Heart left ventricle (tissue), 16 donors: ENCODE measurements at regions of chr2 and their contacts with region 1.

Region 1: GRCh38 chr2:206159346-206160124 is at the starts of genes EEF1B2 and NDUFS1:
- DNase-seq: peak; percentile 98 to 99 (median 98)
- ATAC-seq: peak; percentile 96 to 97 (median 96)
- H3K4me3 ChIP-seq: peak within 1 kb of the TSS; percentile 54 to 96 (median 86)
- H3K27ac ChIP-seq: peak within 1 kb of the TSS; percentile 83 to 99 (median 96)
- H3K4me1 ChIP-seq: peaks cover 3 to 44% (median 34%) of the 10 kb centered on the region in 12 donors
- H3K27me3 ChIP-seq: no peaks in the 10 kb centered on the region
- CTCF ChIP-seq: no peak
- POLR2A ChIP-seq: peak in 1 of 2 donors; percentile 62
- total RNA-seq, gene EEF1B2: 123 to 326 (median 244) TPM
- total RNA-seq, gene NDUFS1: 302 to 804 (median 536) TPM

Region 2: GRCh38 chr2:206004004-206004693 is 155.4 kb before region 1 on chr2:
- intact Hi-C with region 1: no loop called
- DNase-seq: no peak
- ATAC-seq: peak in 3 of 4 donors; percentile 30 to 36 (median 31)
- H3K4me3 ChIP-seq: no peak overlapping the region
- H3K27ac ChIP-seq: no peak overlapping the region
- H3K4me1 ChIP-seq: peaks cover 0 to 3% (median 0%) of the 10 kb centered on the region in 12 donors
- H3K27me3 ChIP-seq: no peaks in the 10 kb centered on the region
- CTCF ChIP-seq: peak in 7 of 12 donors; percentile 6 to 32 (median 18)
- POLR2A ChIP-seq: no peak

Region 3: DNA sequence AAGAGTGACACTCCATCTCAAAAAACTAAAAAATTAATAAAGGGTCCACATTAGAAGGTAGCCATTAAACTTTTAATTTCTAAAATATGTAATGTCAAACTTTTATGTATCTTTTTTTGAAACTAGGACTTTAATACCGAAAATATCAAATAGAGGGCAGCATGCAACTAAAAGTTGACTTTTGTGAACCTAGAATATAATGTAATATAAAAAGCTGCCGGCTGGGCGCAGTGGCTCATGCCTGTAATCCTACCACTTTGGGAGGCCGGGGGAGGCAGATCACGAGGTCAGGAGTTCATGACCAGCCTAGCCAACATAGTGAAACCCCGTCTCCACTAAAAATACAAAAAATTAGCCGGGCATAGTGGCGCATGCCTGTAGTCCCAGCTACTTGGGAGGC is 136.4 kb before region 1 on chr2:
- intact Hi-C with region 1: loop called in 1 of 10 experiments (anchors 10 kb)
- DNase-seq: no peak
- ATAC-seq: no peak
- H3K4me3 ChIP-seq: no peak overlapping the region
- H3K27ac ChIP-seq: no peak overlapping the region
- H3K4me1 ChIP-seq: no peaks in the 10 kb centered on the region
- H3K27me3 ChIP-seq: no peaks in the 10 kb centered on the region
- CTCF ChIP-seq: peak in 4 of 12 donors; percentile 8 to 33 (median 24)
- POLR2A ChIP-seq: no peak

Region 4: GRCh38 chr2:206085742-206086445 is 73.6 kb before region 1 on chr2 and contains the start of gene INO80D:
- intact Hi-C with region 1: loop called in 3 of 10 experiments (anchors 2 to 5 kb)
- DNase-seq: peak; percentile 76 to 87 (median 79)
- ATAC-seq: peak; percentile 79 to 89 (median 86)
- H3K4me3 ChIP-seq: peak within 1 kb of the TSS; percentile 72 to 95 (median 90)
- H3K27ac ChIP-seq: peak within 1 kb of the TSS; percentile 94 to 100 (median 99)
- H3K4me1 ChIP-seq: peaks cover 0 to 37% (median 19%) of the 10 kb centered on the region in 12 donors
- H3K27me3 ChIP-seq: no peaks in the 10 kb centered on the region
- CTCF ChIP-seq: peak; percentile 11 to 67 (median 46)
- POLR2A ChIP-seq: no peak
- total RNA-seq, gene INO80D: 11.2 to 21.7 (median 15.5) TPM

Region 5: DNA sequence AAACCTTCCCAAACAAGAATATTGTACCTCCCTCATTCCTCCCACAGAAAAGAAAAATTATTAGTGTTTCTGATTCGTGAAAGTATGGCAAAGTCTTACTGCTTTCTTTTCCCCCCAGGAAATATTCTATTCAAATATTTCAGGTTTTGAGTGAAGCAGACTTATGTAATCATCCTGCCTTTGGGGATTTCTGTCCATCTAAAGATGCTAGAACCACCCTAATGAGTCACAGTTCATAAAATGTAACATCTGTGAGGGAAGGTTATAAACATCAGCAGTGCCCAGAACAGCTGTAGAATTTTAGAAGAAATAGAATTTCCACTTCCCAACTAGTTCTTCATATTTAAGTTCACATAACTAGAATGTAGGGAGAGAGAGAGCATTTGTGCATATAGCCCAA is 39.1 kb after region 1 on chr2:
- intact Hi-C with region 1: no loop called
- DNase-seq: no peak
- ATAC-seq: peak in 2 of 4 donors; percentile 50 to 53
- H3K4me3 ChIP-seq: no peak overlapping the region
- H3K27ac ChIP-seq: peak overlapping the region in 3 of 12 donors; percentile 9 to 60 (median 46)
- H3K4me1 ChIP-seq: peaks cover 0 to 5% (median 0%) of the 10 kb centered on the region in 12 donors
- H3K27me3 ChIP-seq: no peaks in the 10 kb centered on the region
- CTCF ChIP-seq: no peak
- POLR2A ChIP-seq: no peak

Region 6: GRCh38 chr2:206249714-206250591 is 90.4 kb after region 1 on chr2:
- intact Hi-C with region 1: loop called in 1 of 10 experiments (anchors 10 kb)
- DNase-seq: no peak
- ATAC-seq: peak in 1 of 4 donors; percentile 42
- H3K4me3 ChIP-seq: peak overlapping the region in 9 of 12 donors; percentile 6 to 42 (median 17)
- H3K27ac ChIP-seq: no peak overlapping the region
- H3K4me1 ChIP-seq: peaks cover 0 to 5% (median 0%) of the 10 kb centered on the region in 12 donors
- H3K27me3 ChIP-seq: peaks cover 0 to 76% (median 22%) of the 10 kb centered on the region in 9 donors
- CTCF ChIP-seq: no peak
- POLR2A ChIP-seq: no peak

Region 7: DNA sequence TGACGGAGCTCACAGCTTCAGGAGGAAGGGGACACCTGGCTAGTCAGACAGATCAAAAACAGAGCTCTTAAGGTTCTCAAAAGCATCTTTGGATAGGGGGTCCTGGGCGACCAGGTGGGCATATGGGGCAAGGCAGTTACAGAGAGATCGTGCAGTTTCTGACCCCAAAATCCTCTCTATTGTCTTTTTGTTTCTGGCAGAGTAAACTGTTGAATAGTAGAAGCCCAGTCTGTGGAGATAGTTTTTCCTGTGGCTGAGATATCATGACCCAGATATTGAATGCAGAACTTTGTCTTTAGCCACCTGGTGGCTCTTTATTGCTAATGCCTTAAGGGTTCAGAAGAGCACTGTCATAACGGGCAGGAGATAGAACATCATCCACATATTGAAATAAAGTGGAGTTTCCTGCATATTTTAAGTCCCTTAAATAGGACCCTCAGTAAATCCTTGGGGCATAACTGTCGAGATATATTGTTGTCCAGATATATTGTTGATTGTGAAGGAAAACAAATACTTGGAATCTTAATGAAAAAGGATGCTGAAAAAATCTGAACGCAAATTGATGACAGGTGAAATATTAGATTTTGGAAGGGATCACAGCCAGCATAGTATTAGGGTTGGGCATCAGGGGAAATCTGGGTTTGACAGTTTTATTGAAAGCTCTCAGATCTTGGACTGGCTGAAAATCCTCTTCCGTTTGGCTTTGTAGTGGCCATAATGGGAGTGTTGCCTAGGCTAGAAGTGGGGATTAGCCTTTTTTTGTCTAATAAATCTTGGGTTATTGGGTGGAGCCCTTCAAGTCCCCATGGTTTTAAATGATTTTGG is 100.9 kb after region 1 on chr2:
- intact Hi-C with region 1: loop called in 5 of 10 experiments (anchors 10 kb)
- DNase-seq: no peak
- ATAC-seq: peak in 2 of 4 donors; percentile 50 to 67
- H3K4me3 ChIP-seq: peak overlapping the region in 4 of 12 donors; percentile 23 to 38 (median 28)
- H3K27ac ChIP-seq: no peak overlapping the region
- H3K4me1 ChIP-seq: no peaks in the 10 kb centered on the region
- H3K27me3 ChIP-seq: peaks cover 20 to 100% (median 71%) of the 10 kb centered on the region in 9 donors
- CTCF ChIP-seq: peak in 10 of 12 donors; percentile 17 to 47 (median 28)
- POLR2A ChIP-seq: no peak

Region 8: DNA sequence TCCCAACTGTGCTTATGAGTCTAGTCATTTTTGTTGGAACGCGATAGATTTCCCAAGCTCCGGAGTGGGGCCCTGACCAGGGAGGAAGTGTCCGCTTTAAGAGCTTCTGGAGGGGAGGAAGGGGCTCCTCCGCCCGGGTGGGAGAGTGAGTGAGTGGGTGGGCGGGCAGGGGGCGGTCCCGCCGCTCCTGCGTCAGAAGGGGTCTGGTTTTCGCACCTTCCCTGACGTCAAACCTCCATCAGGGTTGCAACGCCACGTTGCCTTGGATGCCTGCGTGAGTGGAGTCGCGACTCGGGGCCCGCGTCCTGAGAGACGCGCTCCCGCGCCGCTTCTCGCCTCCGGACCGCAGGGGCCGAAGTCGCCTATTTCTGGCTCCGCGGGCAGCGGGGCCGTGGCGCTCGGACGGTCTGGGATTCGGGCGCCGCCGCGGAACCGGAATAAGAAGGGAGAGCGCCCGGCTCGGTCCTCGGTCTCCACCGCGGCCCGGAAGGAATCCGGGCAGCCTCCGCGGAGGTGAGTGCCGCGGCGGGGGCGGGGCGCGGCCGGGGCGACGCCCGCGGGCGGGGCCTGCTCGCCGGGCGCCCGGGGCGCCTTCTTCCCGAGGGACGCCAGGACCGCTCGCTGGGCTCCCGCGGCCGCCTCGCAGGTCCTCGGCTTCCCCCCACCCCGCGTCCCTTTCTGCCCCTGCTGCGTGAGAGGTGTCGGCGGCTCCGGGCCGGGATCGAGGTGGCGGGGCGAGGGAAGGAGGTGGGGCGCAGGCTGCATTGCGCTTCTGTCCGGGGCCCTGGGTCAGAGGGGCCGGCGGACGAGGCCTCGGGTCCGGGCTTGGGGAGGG is 115.1 kb after region 1 on chr2 and contains the start of gene ZDBF2:
- intact Hi-C with region 1: loop called in 7 of 10 experiments (anchors 2 to 10 kb)
- DNase-seq: peak; percentile 23 to 72 (median 50)
- ATAC-seq: peak; percentile 32 to 94 (median 84)
- H3K4me3 ChIP-seq: peak within 1 kb of the TSS; percentile 52 to 90 (median 72)
- H3K27ac ChIP-seq: peak within 1 kb of the TSS; percentile 22 to 80 (median 69)
- H3K4me1 ChIP-seq: peaks cover 0 to 30% (median 2%) of the 10 kb centered on the region in 12 donors
- H3K27me3 ChIP-seq: peaks cover 18 to 94% (median 44%) of the 10 kb centered on the region in 9 donors
- CTCF ChIP-seq: no peak
- POLR2A ChIP-seq: peak in 1 of 2 donors; percentile 28
- total RNA-seq, gene ZDBF2: 4.7 to 14.8 (median 10.2) TPM

Region 9: DNA sequence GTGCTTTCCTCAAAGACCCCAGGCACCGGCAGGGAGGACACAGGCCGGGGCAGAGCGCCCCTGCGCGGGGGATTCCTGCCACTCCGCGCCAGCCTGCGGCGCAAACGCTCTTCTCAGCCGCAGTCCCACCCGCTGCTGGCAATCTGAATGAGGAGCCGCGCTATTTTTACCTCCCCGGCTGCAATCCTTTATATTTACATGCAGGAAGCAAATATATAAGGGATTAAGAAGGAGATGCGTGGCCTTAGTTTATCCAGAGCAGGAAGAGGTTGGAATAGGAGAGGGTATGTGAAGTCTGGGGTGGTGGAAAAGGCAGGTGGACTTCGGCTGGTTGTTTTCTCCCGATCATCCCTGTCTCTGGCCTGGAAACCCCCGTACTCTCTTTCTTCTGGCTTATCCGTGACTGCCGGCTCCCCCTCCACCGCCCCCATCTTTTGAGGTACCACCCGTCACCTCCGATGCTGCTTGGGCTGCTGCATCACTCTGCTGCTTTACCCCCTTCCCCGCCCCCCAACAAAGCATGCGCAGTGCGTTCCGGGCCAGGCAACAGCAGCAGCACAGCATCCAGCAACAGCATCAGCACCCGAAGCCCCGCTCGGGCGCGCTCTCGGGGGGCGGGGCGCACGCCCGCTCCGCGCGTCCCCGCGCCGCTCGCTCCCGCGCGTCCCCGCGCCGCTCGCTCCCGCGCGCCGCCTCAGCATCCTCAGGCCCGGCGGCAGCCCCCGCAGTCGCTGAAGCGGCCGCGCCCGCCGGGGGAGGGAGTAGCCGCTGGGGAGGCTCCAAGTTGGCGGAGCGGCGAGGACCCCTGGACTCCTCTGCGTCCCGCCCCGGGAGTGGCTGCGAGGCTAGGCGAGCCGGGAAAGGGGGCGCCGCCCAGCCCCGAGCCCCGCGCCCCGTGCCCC is 283.5 kb after region 1 on chr2 and contains the start of gene ADAM23:
- intact Hi-C with region 1: loop called in 2 of 10 experiments (anchors 5 to 10 kb)
- DNase-seq: peak; percentile 48 to 76 (median 66)
- ATAC-seq: peak; percentile 73 to 89 (median 88)
- H3K4me3 ChIP-seq: peak within 1 kb of the TSS; percentile 41 to 90 (median 64)
- H3K27ac ChIP-seq: peak within 1 kb of the TSS; percentile 4 to 86 (median 75)
- H3K4me1 ChIP-seq: peaks cover 0 to 37% (median 7%) of the 10 kb centered on the region in 12 donors
- H3K27me3 ChIP-seq: peaks cover 0 to 45% (median 8%) of the 10 kb centered on the region in 9 donors
- CTCF ChIP-seq: peak in 6 of 12 donors; percentile 8 to 53 (median 38)
- POLR2A ChIP-seq: peak in 1 of 2 donors; percentile 54
- total RNA-seq, gene ADAM23: 36.0 to 87.4 (median 71.3) TPM